MCF 10A (cell line): ENCODE measurements at regions of chr7 and their contacts with region 1.

Region 1: DNA sequence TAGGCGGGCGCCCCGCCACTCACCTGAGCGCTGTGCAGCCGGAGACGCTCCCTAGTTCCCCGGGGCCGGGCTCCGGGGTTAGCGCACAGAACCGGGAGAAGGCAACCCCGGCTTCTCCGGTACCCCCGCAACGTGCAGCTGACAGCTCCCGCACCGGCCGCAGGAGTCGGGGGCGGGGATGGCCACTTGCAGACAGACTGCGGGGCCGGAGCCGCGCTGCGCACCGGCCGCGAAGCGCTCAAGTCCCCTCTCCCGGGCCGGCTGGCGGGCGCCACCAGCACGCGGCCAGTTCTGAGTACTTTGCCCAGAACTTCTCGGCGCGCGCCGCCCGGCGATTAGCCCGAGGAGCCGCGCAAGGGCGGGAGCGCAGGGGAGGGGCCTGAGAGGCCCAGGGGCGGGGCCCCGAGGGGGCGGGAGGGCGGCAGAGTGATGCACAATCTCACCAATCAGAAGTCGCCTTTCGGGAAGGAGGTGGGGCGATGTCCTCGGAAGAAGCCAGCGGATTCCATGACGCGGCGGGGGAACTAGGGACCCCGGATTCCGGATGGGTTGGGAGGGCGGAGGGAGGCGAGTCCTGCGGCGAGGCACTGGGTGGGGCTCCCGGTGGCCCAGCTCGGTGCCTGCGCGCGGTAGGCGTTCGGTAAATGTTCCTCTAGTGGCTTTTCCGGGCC is at the start of gene OSBPL3:
- DNase-seq: peak; percentile 96
- H3K4me3 Mint-ChIP-seq: peak within 1 kb of the TSS; percentile 82
- H3K27ac Mint-ChIP-seq: peak within 1 kb of the TSS; percentile 52
- H3K4me1 Mint-ChIP-seq: peaks cover 45% of the 10 kb centered on the region
- H3K27me3 Mint-ChIP-seq: no peaks in the 10 kb centered on the region
- CTCF ChIP-seq: peak; percentile 5
- total RNA-seq, gene OSBPL3: 33.8 and 35.7 TPM in 2 replicates

Region 2: GRCh38 chr7:24742505-24743162 is 237.4 kb before region 1 on chr7:
- CTCF ChIA-PET with region 1: no interaction called
- POLR2A ChIA-PET with region 1: no interaction called
- intact Hi-C with region 1: no loop called
- DNase-seq: no peak
- H3K4me3 Mint-ChIP-seq: no peak overlapping the region
- H3K27ac Mint-ChIP-seq: peak overlapping the region; percentile 90
- H3K4me1 Mint-ChIP-seq: peaks cover 23% of the 10 kb centered on the region
- H3K27me3 Mint-ChIP-seq: no peaks in the 10 kb centered on the region
- CTCF ChIP-seq: no peak

Region 3: GRCh38 chr7:24825931-24826661 is 153.9 kb before region 1 on chr7:
- CTCF ChIA-PET with region 1: interaction called, 104 read pairs
- POLR2A ChIA-PET with region 1: interaction called, 163 read pairs
- intact Hi-C with region 1: no loop called
- DNase-seq: peak; percentile 94
- H3K4me3 Mint-ChIP-seq: peak overlapping the region; percentile 54
- H3K27ac Mint-ChIP-seq: peak overlapping the region; percentile 88
- H3K4me1 Mint-ChIP-seq: peaks cover 62% of the 10 kb centered on the region
- H3K27me3 Mint-ChIP-seq: no peaks in the 10 kb centered on the region
- CTCF ChIP-seq: no peak

Region 4: GRCh38 chr7:24896031-24896501 is 83.9 kb before region 1 on chr7:
- CTCF ChIA-PET with region 1: interaction called, 15 read pairs
- POLR2A ChIA-PET with region 1: interaction called, 10 read pairs
- intact Hi-C with region 1: loop called (anchors 1 kb)
- DNase-seq: no peak
- H3K4me3 Mint-ChIP-seq: no peak overlapping the region
- H3K27ac Mint-ChIP-seq: no peak overlapping the region
- H3K4me1 Mint-ChIP-seq: peaks cover 20% of the 10 kb centered on the region
- H3K27me3 Mint-ChIP-seq: no peaks in the 10 kb centered on the region
- CTCF ChIP-seq: no peak

Region 5: DNA sequence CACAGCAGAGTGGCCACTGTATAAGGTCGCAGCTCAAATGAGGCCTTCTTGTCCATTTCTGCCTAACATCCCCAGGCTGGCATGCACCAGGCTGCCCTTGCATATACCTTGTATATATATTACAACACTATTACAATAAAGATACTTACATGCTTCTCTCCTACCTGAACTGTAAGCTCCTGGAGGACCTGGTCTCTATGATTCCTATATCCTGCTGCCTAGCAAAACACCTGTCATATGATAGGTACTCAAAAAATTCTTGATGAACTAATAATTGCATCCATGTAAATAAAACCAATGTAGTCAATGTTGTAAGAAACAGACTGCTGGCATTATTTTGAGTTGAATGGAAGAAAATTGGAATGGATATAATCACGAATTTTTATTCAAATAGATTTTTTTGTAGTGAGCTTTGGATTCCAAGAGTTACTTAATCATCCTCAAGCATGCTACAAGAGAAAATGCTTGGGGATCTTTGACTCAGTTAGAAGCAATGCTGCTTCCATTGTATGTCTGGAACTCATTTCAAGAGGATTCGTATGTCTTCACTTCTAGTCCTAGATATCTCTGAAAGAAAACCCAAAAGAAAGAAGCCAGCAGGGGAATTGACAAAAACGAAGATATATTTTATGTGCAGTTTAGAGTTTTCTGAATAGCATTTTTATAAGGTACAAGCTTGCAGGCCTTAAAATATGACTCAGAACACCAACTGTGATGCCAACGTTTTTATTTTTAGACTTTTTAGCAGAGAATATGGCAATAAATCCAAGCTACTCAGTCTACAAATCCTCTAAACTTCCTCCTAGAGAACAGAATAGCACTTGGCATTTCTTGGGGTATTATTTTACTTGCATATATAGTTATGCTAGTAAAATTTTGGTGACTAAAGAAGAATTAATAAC is 53.1 kb before region 1 on chr7:
- CTCF ChIA-PET with region 1: interaction called, 4 read pairs
- POLR2A ChIA-PET with region 1: interaction called, 44 read pairs
- intact Hi-C with region 1: no loop called
- DNase-seq: no peak
- H3K4me3 Mint-ChIP-seq: peak overlapping the region; percentile 8
- H3K27ac Mint-ChIP-seq: peak overlapping the region; percentile 50
- H3K4me1 Mint-ChIP-seq: peaks cover 38% of the 10 kb centered on the region
- H3K27me3 Mint-ChIP-seq: no peaks in the 10 kb centered on the region
- CTCF ChIP-seq: no peak

Region 6: GRCh38 chr7:25009257-25009656 is 29.3 kb after region 1 on chr7:
- CTCF ChIA-PET with region 1: interaction called, 12 read pairs
- POLR2A ChIA-PET with region 1: interaction called, 9 read pairs
- intact Hi-C with region 1: no loop called
- DNase-seq: peak; percentile 90
- H3K4me3 Mint-ChIP-seq: no peak overlapping the region
- H3K27ac Mint-ChIP-seq: no peak overlapping the region
- H3K4me1 Mint-ChIP-seq: peaks cover 14% of the 10 kb centered on the region
- H3K27me3 Mint-ChIP-seq: no peaks in the 10 kb centered on the region
- CTCF ChIP-seq: no peak

Region 7: GRCh38 chr7:25093268-25093826 is 113.3 kb after region 1 on chr7:
- CTCF ChIA-PET with region 1: interaction called, 18 read pairs
- POLR2A ChIA-PET with region 1: interaction called, 4 read pairs
- intact Hi-C with region 1: loop called (anchors 1 kb)
- DNase-seq: peak; percentile 85
- H3K4me3 Mint-ChIP-seq: no peak overlapping the region
- H3K27ac Mint-ChIP-seq: no peak overlapping the region
- H3K4me1 Mint-ChIP-seq: peaks cover 7% of the 10 kb centered on the region
- H3K27me3 Mint-ChIP-seq: no peaks in the 10 kb centered on the region
- CTCF ChIP-seq: peak; percentile 82

Region 8: DNA sequence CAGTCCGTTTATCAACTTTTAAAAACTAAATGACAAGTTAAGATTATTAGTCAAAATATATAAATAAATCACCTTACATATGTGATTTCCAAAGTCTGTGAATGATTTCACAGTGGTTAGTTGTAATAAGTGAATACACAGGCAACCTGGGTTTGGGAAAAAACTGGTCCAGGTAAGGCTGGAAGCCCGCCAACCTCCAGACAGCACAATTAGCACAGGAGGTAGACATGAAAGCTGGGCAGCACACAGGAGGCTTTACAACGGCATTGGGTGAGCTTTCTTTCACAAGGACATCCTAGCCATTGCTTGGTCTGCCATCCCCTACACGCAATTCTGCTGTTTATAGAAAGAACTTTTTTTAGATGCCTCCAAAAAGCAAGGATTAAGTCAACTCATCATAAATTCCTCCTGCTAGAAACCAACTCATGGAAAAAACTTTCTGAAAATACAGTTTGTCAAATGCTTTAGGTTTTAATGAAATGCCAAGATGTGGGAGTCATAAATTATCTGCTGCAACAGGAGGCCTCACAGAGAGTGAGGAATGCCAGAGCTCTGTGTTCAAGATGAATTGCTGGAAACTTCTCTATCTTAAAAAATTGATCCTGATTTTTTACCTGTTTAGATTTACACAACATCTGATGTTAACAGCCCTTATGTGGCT is 825.2 kb after region 1 on chr7:
- CTCF ChIA-PET with region 1: no interaction called
- POLR2A ChIA-PET with region 1: no interaction called
- intact Hi-C with region 1: no loop called
- DNase-seq: peak; percentile 64
- H3K4me3 Mint-ChIP-seq: no peak overlapping the region
- H3K27ac Mint-ChIP-seq: no peak overlapping the region
- H3K4me1 Mint-ChIP-seq: peaks cover 22% of the 10 kb centered on the region
- H3K27me3 Mint-ChIP-seq: no peaks in the 10 kb centered on the region
- CTCF ChIP-seq: no peak